Colonic mucosa (tissue), 4 donors: ENCODE measurements at regions of chr22 and their contacts with region 1.

Region 1: GRCh38 chr22:26461188-26461810 is 22.3 kb downstream of the HPS4 start:
- DNase-seq: peak; percentile 63
- H3K4me3 ChIP-seq: no peak overlapping the region
- H3K27ac ChIP-seq: no peak overlapping the region
- H3K4me1 ChIP-seq: no peaks in the 10 kb centered on the region
- H3K27me3 ChIP-seq: no peaks in the 10 kb centered on the region
- CTCF ChIP-seq: peak; percentile 74

Region 2: GRCh38 chr22:26295563-26296126 is 165.7 kb before region 1 on chr22:
- intact Hi-C with region 1: no loop called
- DNase-seq: no peak
- H3K4me3 ChIP-seq: no peak overlapping the region
- H3K27ac ChIP-seq: no peak overlapping the region
- H3K4me1 ChIP-seq: no peaks in the 10 kb centered on the region
- H3K27me3 ChIP-seq: no peaks in the 10 kb centered on the region
- CTCF ChIP-seq: no peak

Region 3: DNA sequence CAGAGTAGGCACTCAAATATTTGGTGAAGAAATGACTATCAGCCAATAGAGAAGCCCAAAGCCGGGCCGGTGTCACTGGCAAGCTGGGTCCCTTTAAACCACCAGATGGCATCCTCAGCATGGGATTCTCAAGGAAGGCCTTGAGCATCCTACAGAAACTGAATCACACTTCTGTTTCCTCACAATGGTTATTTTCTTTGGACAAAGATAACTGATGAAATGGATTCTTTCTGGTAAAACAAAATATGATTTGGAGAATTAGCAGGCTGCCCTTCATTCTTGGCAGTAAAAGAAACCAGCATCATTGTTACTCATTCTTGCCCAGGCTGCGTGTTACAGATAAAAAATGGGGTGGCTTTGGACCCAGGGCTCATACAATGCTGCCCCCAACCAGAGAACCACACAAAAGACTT is 62.6 kb before region 1 on chr22:
- intact Hi-C with region 1: loop called (anchors 2 kb)
- DNase-seq: peak; percentile 56
- H3K4me3 ChIP-seq: no peak overlapping the region
- H3K27ac ChIP-seq: no peak overlapping the region
- H3K4me1 ChIP-seq: no peaks in the 10 kb centered on the region
- H3K27me3 ChIP-seq: no peaks in the 10 kb centered on the region
- CTCF ChIP-seq: peak; percentile 70